ENCODE measurements at regions of chr5 and their contacts with region 1.

Region 1: GRCh38 chr5:53170748-53171349 is 61.3 kb upstream of the MOCS2 start:
- DNase-seq: no peak
- H3K4me3 ChIP-seq: no peak overlapping the region
- H3K27ac ChIP-seq: no peak overlapping the region
- H3K27me3 ChIP-seq: peaks cover 0 to 7% (median 0%) of the 10 kb centered on the region in 45 donors
- CTCF ChIP-seq: peak; percentile 21 to 78 (median 58)

Region 2: GRCh38 chr5:53087621-53088121 is 83.2 kb before region 1 on chr5:
- intact Hi-C with region 1: no loop called
- DNase-seq: peak in 9 of 10 donors; percentile 24 to 69 (median 51)
- H3K4me3 ChIP-seq: no peak overlapping the region
- H3K27ac ChIP-seq: peak overlapping the region in 52 of 59 donors; percentile 11 to 92 (median 81)
- H3K27me3 ChIP-seq: no peaks in the 10 kb centered on the region
- CTCF ChIP-seq: peak in 13 of 56 donors; percentile 1 to 32 (median 14)

Region 3: DNA sequence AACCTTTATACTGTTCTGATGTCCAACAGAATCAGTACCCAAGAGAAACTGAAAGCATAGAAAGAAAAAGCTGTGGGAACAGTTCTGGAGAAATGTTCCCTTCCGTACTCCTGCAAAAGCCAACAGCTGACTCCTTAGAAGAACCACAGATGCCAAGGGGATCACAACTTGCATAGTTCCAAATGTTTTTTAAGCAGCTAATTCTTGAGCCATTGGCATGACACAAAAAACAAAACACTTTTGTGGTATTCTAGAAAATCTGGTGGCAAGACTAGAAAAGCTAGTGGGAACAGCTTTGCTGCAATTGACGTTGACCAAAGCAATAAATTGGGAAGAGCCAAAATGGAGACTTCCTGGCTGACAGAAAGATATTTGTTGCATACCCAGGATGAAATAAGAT is 949.6 kb after region 1 on chr5:
- intact Hi-C with region 1: no loop called
- DNase-seq: no peak
- H3K4me3 ChIP-seq: no peak overlapping the region
- H3K27ac ChIP-seq: no peak overlapping the region
- H3K27me3 ChIP-seq: no peaks in the 10 kb centered on the region
- CTCF ChIP-seq: no peak

Region 4: DNA sequence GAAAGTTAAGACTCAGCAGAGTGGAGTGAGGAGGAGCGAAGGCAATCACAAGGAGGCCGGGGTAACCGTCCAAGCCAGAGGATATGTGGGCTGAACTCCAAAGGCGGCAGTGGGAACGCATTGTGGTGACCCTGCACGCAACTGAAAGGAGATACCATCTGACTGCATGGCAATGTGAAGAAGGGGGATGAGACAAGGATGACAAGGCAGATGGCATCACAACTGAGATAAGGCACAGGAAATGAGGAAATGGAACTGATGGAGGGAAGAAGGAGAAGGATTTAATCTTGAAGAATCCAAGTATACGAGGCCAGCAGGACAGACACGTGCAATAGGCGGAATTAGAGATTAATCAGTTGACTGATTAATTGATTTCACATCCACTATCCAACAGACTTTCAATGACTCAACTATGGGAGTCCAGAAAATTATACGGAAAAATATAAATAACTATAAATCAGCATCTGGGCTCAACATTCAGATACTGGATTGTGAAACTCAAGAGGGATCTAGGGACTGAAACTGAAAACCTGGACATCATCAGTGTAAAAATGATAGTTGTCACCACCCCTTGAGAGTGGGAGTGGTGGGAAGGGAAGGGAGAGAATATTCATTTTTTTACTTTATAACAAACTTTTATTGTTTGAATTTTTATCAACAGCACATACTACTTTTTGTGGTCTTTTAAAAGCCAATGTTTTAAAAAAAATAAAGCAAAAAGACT is 1053.4 kb after region 1 on chr5:
- intact Hi-C with region 1: loop called (anchors 5 to 10 kb)
- DNase-seq: no peak
- H3K4me3 ChIP-seq: no peak overlapping the region
- H3K27ac ChIP-seq: no peak overlapping the region
- H3K27me3 ChIP-seq: no peaks in the 10 kb centered on the region
- CTCF ChIP-seq: no peak

Measured in dorsolateral prefrontal cortex (tissue), 120 donors.